Activated CD4-positive, alpha-beta T cell treated with anti-CD3 and anti-CD28 coated beads for 36 hours (primary cell): ENCODE measurements at regions of chr4 and their contacts with region 1.

Region 1: DNA sequence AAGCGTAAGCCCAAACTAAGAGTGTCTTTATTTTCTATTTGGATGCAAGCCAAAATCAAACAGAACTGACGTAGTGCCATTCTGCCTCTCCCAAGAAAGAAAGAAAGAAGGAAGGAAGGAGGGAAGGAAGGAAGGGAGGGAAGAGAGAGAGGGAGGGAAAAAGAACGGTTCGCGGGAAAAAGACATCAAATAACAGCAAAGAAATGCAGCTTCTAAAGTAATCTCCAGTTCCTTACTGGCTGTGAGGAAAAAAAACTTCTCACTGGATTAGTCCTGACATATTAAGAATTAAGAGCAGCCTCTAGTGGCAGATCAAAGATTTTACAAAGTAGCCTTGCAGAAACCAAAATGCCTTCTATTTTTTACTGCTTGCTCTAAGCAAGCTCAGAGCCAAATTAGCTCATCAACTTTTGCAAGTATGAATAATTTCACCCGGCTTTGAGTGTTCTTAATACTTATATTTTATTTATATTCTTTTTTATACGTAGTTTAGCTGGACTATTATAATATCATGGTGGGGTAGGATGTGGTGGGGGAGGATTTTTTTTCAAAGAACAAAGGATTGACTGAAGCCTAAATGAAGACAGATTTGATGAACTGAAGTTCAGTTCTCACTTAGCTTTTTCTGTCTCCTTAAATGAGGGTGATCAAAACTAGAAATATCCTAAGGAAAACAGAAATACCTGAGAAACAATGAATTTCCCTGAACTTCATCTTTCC is 36.6 kb downstream of the PITX2 start:
- DNase-seq: no peak
- ATAC-seq: no peak
- H3K4me3 Mint-ChIP-seq: no peak overlapping the region
- H3K27ac Mint-ChIP-seq: no peak overlapping the region
- H3K4me1 Mint-ChIP-seq: no peaks in the 10 kb centered on the region
- H3K27me3 Mint-ChIP-seq: peaks cover 7% of the 10 kb centered on the region

Region 2: DNA sequence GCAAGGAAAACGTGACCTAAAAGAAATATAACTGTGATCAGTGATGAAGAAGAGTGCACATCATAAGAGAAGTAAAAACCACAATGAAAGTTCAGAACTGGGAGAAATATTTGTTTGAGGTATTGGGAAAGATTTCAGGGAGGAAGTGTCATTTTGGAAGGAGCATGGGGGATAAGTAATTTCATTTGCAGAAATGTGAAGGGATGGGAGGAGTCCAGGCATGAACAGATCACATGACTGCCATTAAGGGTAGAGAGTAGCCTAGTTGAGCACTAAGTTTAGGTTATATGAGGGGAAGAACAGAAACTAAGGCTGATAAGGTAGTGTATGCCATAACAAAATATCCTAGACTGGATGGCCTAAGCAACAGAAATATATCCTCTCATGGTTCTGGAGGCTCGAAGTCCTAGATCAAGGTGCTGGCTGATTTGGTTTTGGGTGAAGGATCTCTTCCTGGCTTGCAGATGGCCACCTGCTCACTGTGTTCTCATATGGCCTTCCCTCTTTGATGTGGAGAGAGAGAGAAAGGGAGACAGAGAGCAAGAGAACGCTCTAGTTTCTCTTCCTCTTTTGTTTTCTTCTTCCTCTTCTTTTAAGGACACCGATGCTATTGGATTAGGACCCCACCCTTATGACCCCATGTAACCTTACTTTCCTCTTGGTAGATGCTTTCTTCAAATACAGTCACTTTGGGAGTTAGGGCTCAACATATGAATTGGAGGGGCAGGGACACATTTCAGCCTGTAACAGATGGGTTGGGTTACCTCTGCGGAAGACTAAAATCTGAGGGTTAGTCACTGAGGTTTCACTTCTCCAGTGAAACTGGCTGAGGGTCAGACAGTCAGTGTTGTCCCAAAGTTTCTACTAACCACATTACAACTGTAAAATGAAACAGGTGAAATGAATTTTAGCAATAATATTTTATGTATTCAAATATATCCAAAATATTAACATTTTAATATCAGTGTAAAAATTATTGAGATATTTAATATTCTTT is 595.7 kb before region 1 on chr4:
- CTCF ChIA-PET with region 1: no interaction called
- POLR2A ChIA-PET with region 1: no interaction called
- intact Hi-C with region 1: no loop called
- DNase-seq: no peak
- ATAC-seq: no peak
- H3K4me3 Mint-ChIP-seq: no peak overlapping the region
- H3K27ac Mint-ChIP-seq: no peak overlapping the region
- H3K4me1 Mint-ChIP-seq: peaks cover 13% of the 10 kb centered on the region
- H3K27me3 Mint-ChIP-seq: peaks cover 14% of the 10 kb centered on the region

Region 3: GRCh38 chr4:110550260-110550659 is 36.0 kb before region 1 on chr4:
- CTCF ChIA-PET with region 1: no interaction called
- POLR2A ChIA-PET with region 1: no interaction called
- intact Hi-C with region 1: loop called in 1 of 2 experiments (anchors 1 kb)
- DNase-seq: no peak
- ATAC-seq: no peak
- H3K4me3 Mint-ChIP-seq: no peak overlapping the region
- H3K27ac Mint-ChIP-seq: no peak overlapping the region
- H3K4me1 Mint-ChIP-seq: no peaks in the 10 kb centered on the region
- H3K27me3 Mint-ChIP-seq: peaks cover 20% of the 10 kb centered on the region